Activated T-helper 1 cell treated with anti-CD3 and anti-CD28 coated beads, Interleukin-12 subunit alpha, Interleukin-12 subunit beta, Interleukin-2, Interleukin-4 antibody, amounts not matched to agents 30 ng/mL and 10 ng/mL and 1 ng/mL, durations not matched to agents 14 hours and 24 hours and 36 hours (primary cell): ENCODE measurements at regions of chr1 and their contacts with region 1.

Region 1: GRCh38 chr1:11245904-11246719 is 16.2 kb downstream of the MTOR start:
- DNase-seq: no peak
- H3K4me3 Mint-ChIP-seq: no peak overlapping the region
- H3K27ac Mint-ChIP-seq: no peak overlapping the region
- H3K4me1 Mint-ChIP-seq: no peaks in the 10 kb centered on the region
- H3K27me3 Mint-ChIP-seq: no peaks in the 10 kb centered on the region

Region 2: DNA sequence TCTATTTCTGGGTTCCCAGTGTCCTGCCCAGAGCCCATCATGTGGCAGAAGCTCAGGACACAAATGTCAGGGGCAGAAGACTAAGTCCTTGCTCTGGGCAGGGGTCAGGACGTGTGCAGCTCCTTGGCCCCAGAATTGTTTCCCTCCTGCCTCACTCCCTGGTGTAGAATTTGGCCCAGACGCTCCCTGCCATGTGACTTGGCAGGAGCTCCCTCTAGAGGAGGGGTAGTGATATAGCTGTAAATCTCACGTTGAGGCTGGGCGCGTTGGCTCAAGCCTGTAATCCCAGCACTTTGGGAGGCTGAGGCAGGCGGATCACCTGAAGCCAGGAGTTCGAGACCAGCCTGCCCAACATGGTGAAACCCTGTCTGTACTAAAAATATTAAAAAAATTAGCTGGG is 118.1 kb after region 1 on chr1:
- intact Hi-C with region 1: loop called (anchors 1 kb)
- DNase-seq: no peak
- H3K4me3 Mint-ChIP-seq: no peak overlapping the region
- H3K27ac Mint-ChIP-seq: no peak overlapping the region
- H3K4me1 Mint-ChIP-seq: no peaks in the 10 kb centered on the region
- H3K27me3 Mint-ChIP-seq: peaks cover 8% of the 10 kb centered on the region